ENCODE measurements at regions of chr6 and their contacts with region 1.

Region 1: GRCh38 chr6:47413752-47414422 is 63.7 kb upstream of the CD2AP start:
- DNase-seq: no peak
- ATAC-seq: peak; percentile 87

Region 2: GRCh38 chr6:47477497-47478232 is 63.8 kb after region 1 on chr6 and contains the start of gene CD2AP:
- intact Hi-C with region 1: loop called (anchors 5 kb)
- DNase-seq: peak; percentile 91
- ATAC-seq: peak; percentile 97
- total RNA-seq, gene CD2AP: 10.0 TPM

Region 3: GRCh38 chr6:47603995-47604394 is 190.1 kb after region 1 on chr6:
- intact Hi-C with region 1: loop called (anchors 10 kb)
- DNase-seq: no peak
- ATAC-seq: no peak

Region 4: GRCh38 chr6:47631269-47631772 is 217.4 kb after region 1 on chr6:
- intact Hi-C with region 1: loop called (anchors 2 kb)
- DNase-seq: no peak
- ATAC-seq: peak; percentile 52

Region 5: GRCh38 chr6:47733879-47734558 is 320.1 kb after region 1 on chr6:
- intact Hi-C with region 1: loop called (anchors 5 kb)
- DNase-seq: no peak
- ATAC-seq: no peak

Region 6: GRCh38 chr6:47780510-47781356 is 366.8 kb after region 1 on chr6:
- intact Hi-C with region 1: loop called (anchors 2 kb)
- DNase-seq: no peak
- ATAC-seq: peak; percentile 79

Region 7: DNA sequence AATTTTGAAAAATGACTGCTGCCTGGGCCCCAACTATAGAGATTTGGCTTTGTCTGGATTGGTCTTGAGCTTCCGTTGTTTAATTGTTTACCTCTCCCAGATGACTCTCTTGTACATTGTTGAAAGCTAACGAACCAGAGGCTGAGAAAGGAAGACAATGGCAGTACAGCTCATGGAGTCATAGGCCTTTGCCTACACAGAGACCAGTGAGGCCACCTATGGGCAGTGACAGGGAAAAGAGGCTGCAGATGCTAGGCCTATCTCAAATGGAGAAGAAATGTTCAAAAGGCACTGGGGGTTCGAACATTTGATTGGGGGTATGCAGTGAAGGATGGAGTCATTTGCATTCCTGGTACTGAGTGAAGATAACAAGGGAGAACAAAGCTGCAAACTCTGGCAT is 397.0 kb after region 1 on chr6:
- intact Hi-C with region 1: no loop called
- DNase-seq: no peak
- ATAC-seq: no peak

Measured in Right ventricle myocardium inferior (tissue), 1 donor.